Ascending aorta (tissue), 2 donors: ENCODE measurements at regions of chr17 and their contacts with region 1.

Region 1: GRCh38 chr17:47970704-47971463 is at the start of gene CDK5RAP3:
- DNase-seq: peak; percentile 99 to 100
- H3K4me3 ChIP-seq: peak within 1 kb of the TSS; percentile 82 to 98
- H3K27ac ChIP-seq: peak within 1 kb of the TSS; percentile 86 to 87
- H3K4me1 ChIP-seq: peaks cover 3 to 15% of the 10 kb centered on the region in 2 donors
- H3K27me3 ChIP-seq: no peaks in the 10 kb centered on the region
- CTCF ChIP-seq: peak; percentile 90 to 98 (median 97)
- total RNA-seq, gene CDK5RAP3: 52.3 TPM

Region 2: DNA sequence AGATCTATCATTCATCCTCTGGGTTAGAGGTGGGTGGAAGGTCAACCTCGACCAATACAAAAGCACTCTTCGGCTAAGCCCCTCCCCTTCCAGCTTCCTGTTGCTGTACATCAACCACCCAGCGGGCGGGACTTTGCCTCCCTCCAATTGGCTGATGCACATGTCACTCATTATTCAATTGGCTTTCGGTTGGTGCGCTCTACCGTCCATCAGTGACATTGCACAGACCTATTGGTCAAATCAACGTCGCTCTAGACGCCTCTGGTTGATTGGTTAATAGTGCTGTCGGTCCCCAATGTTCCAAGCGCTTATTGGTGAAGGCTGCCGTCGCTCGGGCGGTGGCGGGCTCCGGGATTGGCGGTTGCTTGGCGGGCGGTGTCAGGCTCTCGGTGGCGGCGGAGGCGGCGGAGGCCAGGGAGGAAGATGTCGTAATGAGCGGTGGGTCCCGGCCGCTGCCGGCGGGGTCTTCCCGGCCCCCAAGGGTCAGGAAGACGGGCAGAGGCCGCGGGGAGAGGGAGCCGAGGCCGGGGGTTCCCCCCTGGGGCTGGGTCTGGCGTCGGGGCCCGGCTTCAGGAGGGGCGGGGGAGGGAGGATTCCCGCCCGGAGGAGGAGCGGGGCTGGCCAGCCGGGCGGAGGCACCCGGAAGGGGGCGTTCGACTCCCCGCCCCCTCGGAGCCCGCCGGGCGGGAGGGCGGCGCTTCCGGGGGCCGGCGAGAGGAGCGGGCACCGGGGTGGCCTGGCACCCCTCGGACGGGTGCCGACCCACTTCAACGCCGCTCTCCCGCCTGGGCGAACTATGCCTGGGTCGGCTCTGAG is 74.8 kb before region 1 on chr17 and contains the start of gene SP2:
- intact Hi-C with region 1: loop called (anchors 1 kb)
- DNase-seq: peak; percentile 100
- H3K4me3 ChIP-seq: peak within 1 kb of the TSS; percentile 76 to 84
- H3K27ac ChIP-seq: peak within 1 kb of the TSS; percentile 96 to 100
- H3K4me1 ChIP-seq: peaks cover 4 to 35% of the 10 kb centered on the region in 2 donors
- H3K27me3 ChIP-seq: no peaks in the 10 kb centered on the region
- CTCF ChIP-seq: peak in 1 of 3 experiments; percentile 6
- total RNA-seq, gene SP2: 198 TPM

Region 3: GRCh38 chr17:47941236-47941994 is 29.5 kb before region 1 on chr17 and contains the start of gene PNPO:
- intact Hi-C with region 1: loop called (anchors 1 kb)
- DNase-seq: peak; percentile 94 to 98
- H3K4me3 ChIP-seq: peak within 1 kb of the TSS; percentile 93 to 96
- H3K27ac ChIP-seq: peak within 1 kb of the TSS; percentile 69 to 84
- H3K4me1 ChIP-seq: peaks cover 7 to 12% of the 10 kb centered on the region in 2 donors
- H3K27me3 ChIP-seq: no peaks in the 10 kb centered on the region
- CTCF ChIP-seq: peak in 1 of 3 experiments; percentile 4
- total RNA-seq, gene PNPO: 36.7 TPM

Region 4: GRCh38 chr17:48047741-48048383 is 77.0 kb after region 1 on chr17 and contains the start of gene NFE2L1:
- intact Hi-C with region 1: loop called (anchors 1 kb)
- DNase-seq: peak; percentile 99 to 100
- H3K4me3 ChIP-seq: peak within 1 kb of the TSS; percentile 63 to 88
- H3K27ac ChIP-seq: peak within 1 kb of the TSS; percentile 90 to 95
- H3K4me1 ChIP-seq: peaks cover 26 to 40% of the 10 kb centered on the region in 2 donors
- H3K27me3 ChIP-seq: no peaks in the 10 kb centered on the region
- CTCF ChIP-seq: no peak
- total RNA-seq, gene NFE2L1: 114 TPM